ENCODE measurements at regions of chr11 and their contacts with region 1.

Region 1: DNA sequence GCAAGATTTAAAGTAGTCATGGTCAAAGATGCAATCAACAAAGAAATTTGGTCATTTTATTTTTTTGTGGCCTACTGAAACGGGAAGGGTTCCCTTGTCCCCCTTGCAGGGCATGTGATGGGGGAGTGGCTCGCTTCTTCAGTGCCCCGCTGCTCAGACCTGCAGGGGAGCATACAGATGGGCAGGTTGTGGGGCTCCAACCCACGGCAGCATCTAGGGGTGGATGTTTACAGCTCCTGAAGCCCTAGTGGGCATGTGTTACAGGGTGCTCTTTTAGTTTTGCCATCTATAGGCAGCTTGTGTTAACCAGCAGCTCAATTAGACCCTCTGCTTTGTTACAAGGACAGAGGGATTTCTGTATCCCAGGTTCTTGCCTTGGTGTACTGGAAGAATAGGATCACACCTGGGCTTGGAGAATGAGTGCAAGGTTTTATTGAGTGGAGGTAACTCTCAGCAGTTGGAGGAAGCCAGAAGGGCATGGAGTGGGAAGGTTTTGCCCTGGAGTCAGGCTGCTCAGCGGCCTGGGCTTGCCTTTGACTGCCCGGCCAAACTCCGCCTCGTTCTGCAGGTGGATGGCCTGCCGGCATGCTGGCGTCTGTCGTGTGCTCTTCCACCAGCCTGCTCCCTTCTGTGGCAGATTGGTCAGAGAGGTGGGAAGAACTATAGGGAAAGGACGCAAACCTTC is 9.4 kb downstream of the GSTP1 start:
- DNase-seq: no peak
- H3K4me3 Mint-ChIP-seq: no peak overlapping the region
- H3K27ac Mint-ChIP-seq: no peak overlapping the region
- H3K4me1 Mint-ChIP-seq: no peaks in the 10 kb centered on the region
- H3K27me3 Mint-ChIP-seq: no peaks in the 10 kb centered on the region

Region 2: GRCh38 chr11:67213178-67213621 is 379.8 kb before region 1 on chr11:
- CTCF ChIA-PET with region 1: no interaction called
- intact Hi-C with region 1: no loop called
- DNase-seq: no peak
- H3K4me3 Mint-ChIP-seq: no peak overlapping the region
- H3K27ac Mint-ChIP-seq: no peak overlapping the region
- H3K4me1 Mint-ChIP-seq: peaks cover 6% of the 10 kb centered on the region
- H3K27me3 Mint-ChIP-seq: no peaks in the 10 kb centered on the region

Region 3: DNA sequence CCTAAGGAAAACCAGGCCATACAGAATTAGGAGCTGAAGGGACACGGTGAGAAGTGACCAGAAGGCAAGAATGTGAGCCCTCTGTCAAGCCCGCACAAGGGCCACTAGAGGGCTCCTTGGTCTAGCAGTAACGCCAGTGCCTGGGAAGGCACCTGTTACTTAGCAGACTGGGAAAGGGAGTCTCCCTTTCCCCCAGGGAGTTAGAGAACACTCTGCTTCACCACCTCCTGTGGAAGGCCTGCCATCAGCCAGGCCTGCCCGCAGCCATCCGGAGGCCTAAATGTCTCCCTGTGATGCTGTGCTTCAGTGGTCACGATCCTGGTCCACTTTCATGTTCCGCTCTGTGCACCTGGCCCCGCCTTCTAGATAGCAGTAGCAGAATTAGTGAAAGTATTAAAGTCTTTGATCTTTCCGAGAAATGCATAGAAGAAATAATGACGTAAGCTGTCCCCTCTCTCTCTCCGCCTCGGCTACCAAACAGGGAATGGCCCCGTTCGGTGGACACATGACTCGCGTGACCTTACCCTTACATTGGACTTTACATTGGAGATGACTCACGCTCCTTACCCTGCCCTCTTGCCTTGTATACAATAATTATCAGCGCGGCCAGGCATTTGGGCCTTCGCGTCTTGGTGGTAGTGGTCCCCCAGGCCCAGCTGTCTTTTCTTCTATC is 20.1 kb before region 1 on chr11:
- CTCF ChIA-PET with region 1: interaction called, 10 read pairs
- intact Hi-C with region 1: no loop called
- DNase-seq: peak; percentile 59
- H3K4me3 Mint-ChIP-seq: no peak overlapping the region
- H3K27ac Mint-ChIP-seq: no peak overlapping the region
- H3K4me1 Mint-ChIP-seq: no peaks in the 10 kb centered on the region
- H3K27me3 Mint-ChIP-seq: peaks cover 8% of the 10 kb centered on the region